GM18951 (cell line): ENCODE measurements at regions of chr4 and their contacts with region 1.

Region 1: DNA sequence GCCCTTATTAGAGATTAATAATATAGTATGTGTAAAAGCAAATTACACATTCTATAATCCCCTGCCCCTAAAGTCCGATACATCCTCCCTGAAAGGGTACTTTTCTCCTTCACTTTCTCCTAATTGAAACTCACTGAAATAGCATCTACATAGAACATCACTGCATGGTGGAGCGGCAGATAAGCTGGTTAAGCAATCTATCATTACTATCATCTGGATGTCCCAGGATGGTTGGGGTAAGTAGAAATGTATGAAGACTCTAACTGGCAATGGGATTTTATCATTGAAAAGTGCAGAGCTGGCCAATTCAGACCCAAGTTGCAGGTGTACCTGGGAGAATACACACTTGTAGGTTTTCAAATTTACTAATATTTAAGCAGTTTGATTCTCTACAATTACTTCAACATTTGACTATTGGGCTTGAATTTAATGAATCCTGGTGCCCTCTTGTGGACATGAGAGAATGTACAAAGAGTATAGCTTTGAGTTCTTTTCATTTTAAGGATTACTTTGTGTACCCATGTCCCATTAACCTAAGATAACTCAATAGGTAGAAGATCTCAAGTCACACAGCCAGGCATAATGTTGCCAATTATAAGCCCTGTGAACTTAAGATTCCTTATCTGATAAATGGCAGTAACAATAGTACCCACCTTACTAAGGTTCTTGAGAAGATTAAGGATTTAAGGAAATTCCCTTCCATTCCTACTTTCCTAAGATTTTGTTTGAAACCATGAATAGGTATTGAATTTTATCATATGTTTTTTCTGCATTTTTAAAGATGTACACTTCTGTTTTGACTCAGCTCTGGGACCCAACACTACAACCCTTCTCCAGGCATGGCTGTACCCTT is 69.8 kb downstream of the SHROOM3 start:
- POLR2A ChIP-seq: no peak

Region 2: GRCh38 chr4:76430519-76431388 is 74.1 kb before region 1 on chr4:
- in situ Hi-C with region 1: loop called (anchors 5 kb)
- POLR2A ChIP-seq: no peak

Region 3: DNA sequence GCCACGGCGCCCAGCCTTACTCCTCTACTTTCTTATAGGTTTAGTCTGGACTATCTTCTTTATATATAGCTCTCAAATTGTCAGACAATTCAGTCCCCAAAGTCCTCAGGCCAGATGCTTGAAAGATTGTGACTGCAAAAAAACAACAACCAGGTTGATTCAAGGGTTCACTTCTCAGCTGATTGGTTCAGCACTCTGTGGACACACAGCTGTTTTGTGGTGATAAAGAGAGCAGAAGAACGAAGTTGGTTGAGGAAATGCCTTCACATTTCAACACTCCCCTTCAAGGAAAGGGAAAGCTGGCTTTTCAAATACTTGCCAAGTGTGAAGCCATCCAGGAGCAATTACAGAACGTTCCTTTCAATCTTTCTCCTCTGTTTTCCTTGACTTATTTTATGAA is 97.0 kb after region 1 on chr4:
- in situ Hi-C with region 1: no loop called
- POLR2A ChIP-seq: no peak

Region 4: DNA sequence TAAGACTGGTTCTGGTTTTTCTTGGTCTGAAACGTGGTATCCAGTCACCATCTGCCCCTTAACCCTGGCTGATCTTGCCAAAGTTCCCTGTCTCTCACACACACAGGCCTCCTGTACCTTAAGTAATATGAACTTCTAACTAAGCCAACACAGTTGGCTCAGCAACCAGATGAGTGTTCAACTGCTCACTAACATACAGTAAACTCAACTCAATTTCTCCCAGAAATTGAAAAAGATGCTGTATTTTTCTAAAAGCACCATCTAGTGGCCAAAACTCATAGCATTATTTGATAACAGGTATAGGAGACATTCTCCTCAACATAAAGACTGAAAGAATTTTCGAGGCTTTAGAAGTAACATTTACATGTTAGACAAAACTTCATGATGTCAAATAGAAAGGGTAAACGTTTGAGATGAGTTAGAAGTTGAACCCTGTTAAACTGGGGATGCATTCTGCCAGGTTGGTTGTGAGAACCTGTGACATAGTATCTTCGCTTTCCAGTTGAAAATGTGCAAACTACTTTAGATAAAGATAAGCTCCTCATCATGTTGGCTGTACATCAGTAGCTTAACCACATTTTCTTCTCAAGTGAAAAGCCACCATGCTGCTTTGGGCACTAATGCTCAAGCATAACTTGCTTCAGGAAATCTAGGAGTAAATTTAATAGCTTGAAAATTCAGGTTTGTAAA is 539.8 kb after region 1 on chr4:
- in situ Hi-C with region 1: loop called (anchors 25 kb)
- POLR2A ChIP-seq: no peak

Region 5: GRCh38 chr4:77473509-77473908 is 968.7 kb after region 1 on chr4:
- in situ Hi-C with region 1: no loop called
- POLR2A ChIP-seq: no peak